ENCODE measurements at regions of chr1 and their contacts with region 1.

Region 1: DNA sequence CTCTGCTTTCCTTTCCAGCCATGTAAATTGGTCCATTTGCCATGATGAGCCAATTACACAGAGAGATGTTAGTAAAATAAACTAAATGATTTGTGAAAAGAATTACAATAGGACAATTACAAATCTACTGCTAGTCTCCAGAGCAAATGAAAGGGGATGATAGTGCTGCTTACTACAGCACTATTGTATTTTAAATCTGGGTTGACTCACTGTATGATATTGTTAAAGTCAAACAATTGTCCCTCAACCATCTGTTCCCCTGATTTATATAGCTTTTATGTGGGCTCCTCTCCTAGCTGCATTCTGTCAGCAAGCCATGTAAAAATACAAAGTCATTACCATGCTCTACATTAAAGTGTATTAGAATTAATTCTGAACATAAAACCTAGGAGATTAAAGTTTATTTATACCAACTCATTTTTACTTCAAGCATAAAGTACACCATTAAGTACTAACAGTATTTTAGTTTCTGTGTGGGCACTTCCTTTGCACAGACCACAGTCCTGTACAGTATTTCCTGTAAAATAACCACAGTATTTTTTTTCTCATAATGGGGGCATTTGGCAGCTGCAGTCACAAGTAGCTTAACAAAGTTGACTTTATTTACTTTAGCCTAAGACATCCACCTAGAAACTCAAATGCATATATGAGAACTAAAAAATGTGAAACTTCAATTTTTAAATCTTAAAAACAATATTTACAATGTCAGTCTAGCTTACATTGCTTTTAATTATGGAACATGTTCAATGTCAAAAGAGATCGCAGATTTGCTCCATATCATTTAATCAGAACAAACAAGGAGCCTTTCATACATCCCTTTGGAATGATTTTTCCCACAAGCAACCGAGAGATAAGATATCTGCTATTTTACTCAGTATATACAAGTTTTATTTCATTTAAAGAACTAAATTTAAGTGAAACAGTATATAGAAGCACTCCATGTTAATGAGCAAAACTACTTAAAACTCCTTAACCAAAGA is 135.6 kb downstream of the VAV3 start:
- DNase-seq: no peak
- ATAC-seq: peak; percentile 80
- H3K4me3 ChIP-seq: no peak overlapping the region
- H3K4me3 Mint-ChIP-seq: peak overlapping the region in 8 of 10 donors; percentile 18 to 65 (median 42)
- H3K27ac ChIP-seq: no peak overlapping the region
- H3K27ac Mint-ChIP-seq: peak overlapping the region in 7 of 9 donors; percentile 25 to 56 (median 32)
- H3K4me1 ChIP-seq: peaks cover 9 to 38% of the 10 kb centered on the region in 2 donors
- H3K4me1 Mint-ChIP-seq: peaks cover 23 to 59% (median 27%) of the 10 kb centered on the region in 7 donors
- H3K27me3 ChIP-seq: no peaks in the 10 kb centered on the region
- H3K27me3 Mint-ChIP-seq: no peaks in the 10 kb centered on the region

Region 2: DNA sequence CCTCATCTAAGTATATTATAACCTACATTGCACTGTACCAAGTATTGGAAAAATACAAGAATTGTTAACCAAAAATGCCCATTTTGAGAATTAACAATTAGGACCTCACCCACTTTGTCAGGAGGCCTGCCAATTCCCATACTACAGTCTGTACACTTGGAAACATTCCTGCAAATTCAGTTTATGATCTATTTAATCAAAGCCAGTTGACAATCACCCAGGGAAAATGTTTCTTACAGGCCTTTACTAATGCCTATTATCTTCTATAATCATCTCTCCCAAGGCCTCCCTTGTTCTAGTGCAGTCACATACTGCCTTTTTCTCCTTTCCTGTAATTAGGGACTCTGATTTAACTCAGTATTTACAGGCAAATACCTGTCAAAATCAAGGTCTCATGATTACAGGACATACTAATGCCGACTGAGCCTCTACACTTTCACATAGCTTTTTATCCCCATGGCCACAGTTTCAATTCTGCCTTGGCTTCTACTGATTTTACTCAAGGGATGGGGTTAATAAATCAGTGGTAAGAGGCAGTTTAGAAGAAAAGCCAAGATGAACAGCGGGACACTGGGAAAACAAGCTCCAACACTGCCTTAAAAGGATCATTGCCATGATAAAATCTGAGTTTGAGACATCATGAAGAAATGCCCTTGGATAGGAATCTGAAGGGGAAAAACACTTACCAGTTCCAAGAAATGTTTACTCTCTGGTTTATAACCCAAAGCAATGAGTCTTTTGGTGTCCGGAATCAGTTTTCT is 203.1 kb before region 1 on chr1:
- CTCF ChIA-PET with region 1: no interaction called
- POLR2A ChIA-PET with region 1: no interaction called
- intact Hi-C with region 1: no loop called
- DNase-seq: no peak
- ATAC-seq: no peak
- H3K4me3 ChIP-seq: no peak overlapping the region
- H3K4me3 Mint-ChIP-seq: no peak overlapping the region
- H3K27ac ChIP-seq: no peak overlapping the region
- H3K27ac Mint-ChIP-seq: no peak overlapping the region
- H3K4me1 ChIP-seq: no peaks in the 10 kb centered on the region
- H3K4me1 Mint-ChIP-seq: peaks cover 0 to 4% (median 0%) of the 10 kb centered on the region in 7 donors
- H3K27me3 ChIP-seq: no peaks in the 10 kb centered on the region
- H3K27me3 Mint-ChIP-seq: no peaks in the 10 kb centered on the region

Region 3: DNA sequence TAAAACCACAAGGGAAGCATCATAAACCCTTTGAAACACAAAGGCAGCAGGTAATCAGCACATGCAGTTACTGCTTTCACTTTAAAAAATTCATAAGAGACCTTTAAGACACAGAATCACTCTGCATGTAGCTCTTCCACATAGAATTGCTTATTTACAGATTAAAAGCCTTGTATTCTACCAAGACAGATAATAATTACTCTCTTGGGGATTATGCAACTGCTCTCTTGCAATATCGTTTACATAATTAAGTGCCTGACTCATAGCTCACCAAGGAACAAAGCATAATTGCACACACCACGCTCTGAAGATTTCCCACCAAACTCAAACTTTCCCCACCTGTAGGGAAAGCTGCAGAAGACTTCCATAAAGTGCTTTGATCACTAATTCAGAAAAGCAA is 47.7 kb after region 1 on chr1:
- CTCF ChIA-PET with region 1: no interaction called
- POLR2A ChIA-PET with region 1: no interaction called
- intact Hi-C with region 1: no loop called
- DNase-seq: no peak
- ATAC-seq: peak; percentile 57
- H3K4me3 ChIP-seq: no peak overlapping the region
- H3K4me3 Mint-ChIP-seq: peak overlapping the region in 1 of 10 donors; percentile 40
- H3K27ac ChIP-seq: no peak overlapping the region
- H3K27ac Mint-ChIP-seq: no peak overlapping the region
- H3K4me1 ChIP-seq: peaks cover 0 to 5% of the 10 kb centered on the region in 2 donors
- H3K4me1 Mint-ChIP-seq: peaks cover 0 to 56% (median 5%) of the 10 kb centered on the region in 7 donors
- H3K27me3 ChIP-seq: no peaks in the 10 kb centered on the region
- H3K27me3 Mint-ChIP-seq: no peaks in the 10 kb centered on the region

Region 4: DNA sequence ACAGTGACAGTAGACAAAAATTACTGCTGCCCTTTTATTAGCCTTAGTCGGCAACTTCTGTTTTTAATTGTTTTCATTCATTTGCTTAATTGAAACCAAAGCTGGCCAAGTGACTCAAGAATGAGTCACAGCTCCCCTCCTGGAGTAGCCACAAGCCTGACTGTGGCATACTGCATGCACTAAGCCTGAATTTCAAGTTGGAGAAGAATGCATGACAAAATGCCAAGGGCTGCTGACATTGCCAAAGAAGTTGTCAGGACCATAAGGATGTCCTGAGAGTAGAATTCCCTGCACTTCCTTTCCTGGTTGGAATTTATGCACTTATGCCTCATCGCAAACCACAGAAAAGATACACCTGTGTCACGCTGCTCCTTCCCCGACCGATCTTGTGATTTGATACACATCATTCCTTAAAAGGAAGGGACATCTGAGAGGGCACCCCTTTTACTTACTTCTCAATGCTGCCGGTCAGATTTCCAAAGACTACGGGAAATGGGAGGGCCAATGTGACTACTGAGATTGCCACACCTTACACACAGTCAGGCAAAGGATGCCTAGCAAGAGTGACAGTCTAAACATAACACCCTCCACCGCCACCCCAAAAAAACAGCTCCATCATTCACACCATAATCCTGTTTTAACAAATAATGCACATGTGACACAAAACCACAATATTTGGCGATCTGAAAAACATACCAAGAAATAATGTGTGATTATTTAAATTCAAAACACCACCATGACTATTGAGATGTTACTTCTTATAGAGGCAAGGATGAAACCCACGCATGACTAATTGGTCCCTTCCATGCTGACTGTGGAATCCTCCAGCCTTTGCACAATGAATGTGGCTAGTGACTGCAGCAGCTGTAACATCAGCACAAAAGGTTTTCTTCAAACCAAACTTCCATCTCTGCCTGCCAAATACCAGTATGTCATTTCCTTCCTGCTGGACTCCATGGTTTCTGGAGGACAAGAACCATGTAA is 107.4 kb after region 1 on chr1:
- CTCF ChIA-PET with region 1: no interaction called
- POLR2A ChIA-PET with region 1: no interaction called
- intact Hi-C with region 1: loop called in 1 of 2 experiments (anchors 10 kb)
- DNase-seq: peak in 1 of 9 donors; percentile 43
- ATAC-seq: peak; percentile 82
- H3K4me3 ChIP-seq: no peak overlapping the region
- H3K4me3 Mint-ChIP-seq: peak overlapping the region in 2 of 10 donors; percentile 23 to 33
- H3K27ac ChIP-seq: no peak overlapping the region
- H3K27ac Mint-ChIP-seq: peak overlapping the region in 3 of 9 donors; percentile 7 to 28 (median 26)
- H3K4me1 ChIP-seq: peaks cover 0 to 14% of the 10 kb centered on the region in 2 donors
- H3K4me1 Mint-ChIP-seq: peaks cover 24 to 68% (median 38%) of the 10 kb centered on the region in 7 donors
- H3K27me3 ChIP-seq: no peaks in the 10 kb centered on the region
- H3K27me3 Mint-ChIP-seq: no peaks in the 10 kb centered on the region